Heart right ventricle (tissue), 16 donors: ENCODE measurements at regions of chr7 and their contacts with region 1.

Region 1: GRCh38 chr7:99806839-99807478 is 20.9 kb upstream of the CYP3A43 start:
- DNase-seq: no peak
- ATAC-seq: no peak
- H3K4me3 ChIP-seq: no peak overlapping the region
- H3K27ac ChIP-seq: no peak overlapping the region
- H3K4me1 ChIP-seq: no peaks in the 10 kb centered on the region
- H3K27me3 ChIP-seq: peaks cover 0 to 5% (median 0%) of the 10 kb centered on the region in 7 donors
- CTCF ChIP-seq: no peak

Region 2: GRCh38 chr7:99200691-99201440 is 606.1 kb before region 1 on chr7:
- intact Hi-C with region 1: no loop called
- DNase-seq: no peak
- ATAC-seq: no peak
- H3K4me3 ChIP-seq: no peak overlapping the region
- H3K27ac ChIP-seq: no peak overlapping the region
- H3K4me1 ChIP-seq: no peaks in the 10 kb centered on the region
- H3K27me3 ChIP-seq: no peaks in the 10 kb centered on the region
- CTCF ChIP-seq: no peak

Region 3: DNA sequence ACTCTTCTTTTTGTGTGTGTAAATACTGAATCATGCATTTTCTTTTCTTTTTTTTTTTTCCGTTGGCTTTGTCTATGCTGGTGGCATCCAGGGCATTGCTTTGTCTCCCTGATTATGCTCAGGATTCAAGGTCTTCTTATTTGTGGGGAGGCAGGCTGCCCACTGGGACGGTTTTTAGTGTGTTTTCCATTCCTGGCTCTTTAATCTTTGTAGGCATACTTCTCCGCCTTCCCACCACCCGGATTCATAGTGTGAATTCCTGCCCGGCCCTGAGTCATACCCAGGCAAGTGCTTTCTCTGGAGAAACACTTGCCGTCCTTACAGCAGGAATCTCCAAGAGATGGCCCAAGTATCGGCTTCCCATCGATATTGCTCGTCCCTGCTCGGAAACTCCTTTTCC is 243.3 kb before region 1 on chr7:
- intact Hi-C with region 1: no loop called
- DNase-seq: no peak
- ATAC-seq: no peak
- H3K4me3 ChIP-seq: no peak overlapping the region
- H3K27ac ChIP-seq: no peak overlapping the region
- H3K4me1 ChIP-seq: peaks cover 4 to 41% (median 19%) of the 10 kb centered on the region in 9 donors
- H3K27me3 ChIP-seq: no peaks in the 10 kb centered on the region
- CTCF ChIP-seq: no peak

Region 4: DNA sequence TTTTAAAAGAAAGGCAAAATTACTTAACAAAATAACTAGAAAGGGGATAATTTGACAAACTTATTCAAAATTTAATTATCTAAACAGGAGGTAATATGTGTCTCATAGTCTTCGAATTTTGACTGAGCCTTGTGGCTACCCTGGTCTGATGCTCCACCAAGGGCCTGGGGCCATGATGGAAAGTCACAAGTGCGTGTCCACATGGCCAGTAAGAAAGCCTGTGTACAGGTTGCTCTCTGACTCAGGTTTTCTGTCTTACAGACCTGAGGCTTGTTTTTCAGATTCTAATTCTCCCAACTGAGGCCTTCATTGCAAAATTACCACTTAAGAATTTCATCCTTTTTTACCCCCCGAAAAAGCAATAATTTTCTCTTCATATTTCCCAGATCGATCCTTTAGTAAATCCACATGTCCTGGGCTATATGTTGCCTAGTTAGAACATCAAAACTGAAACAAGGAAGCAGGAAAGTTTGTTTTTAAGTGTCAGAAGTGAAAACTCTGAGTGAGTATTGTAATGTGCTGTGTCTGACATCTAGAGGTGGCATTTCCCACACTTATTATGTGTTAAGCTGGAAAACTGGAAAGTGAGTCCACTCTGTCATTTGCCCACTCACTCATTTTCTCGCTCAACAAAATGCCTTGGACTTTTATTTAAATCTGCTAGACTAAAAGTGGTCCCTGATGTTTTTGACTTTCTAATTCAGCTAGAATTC is 30.8 kb after region 1 on chr7:
- intact Hi-C with region 1: no loop called
- DNase-seq: no peak
- ATAC-seq: no peak
- H3K4me3 ChIP-seq: no peak overlapping the region
- H3K27ac ChIP-seq: no peak overlapping the region
- H3K4me1 ChIP-seq: peaks cover 0 to 4% (median 0%) of the 10 kb centered on the region in 9 donors
- H3K27me3 ChIP-seq: no peaks in the 10 kb centered on the region
- CTCF ChIP-seq: peak in 4 of 9 donors; percentile 11 to 29 (median 20)

Region 5: GRCh38 chr7:100022665-100023064 is 215.7 kb after region 1 on chr7:
- intact Hi-C with region 1: loop called in 1 of 10 experiments (anchors 10 kb)
- DNase-seq: no peak
- ATAC-seq: peak in 1 of 8 donors; percentile 36
- H3K4me3 ChIP-seq: no peak overlapping the region
- H3K27ac ChIP-seq: no peak overlapping the region
- H3K4me1 ChIP-seq: peaks cover 0 to 34% (median 16%) of the 10 kb centered on the region in 9 donors
- H3K27me3 ChIP-seq: no peaks in the 10 kb centered on the region
- CTCF ChIP-seq: no peak